Activated naive CD4-positive, alpha-beta T cell treated with anti-CD3 and anti-CD28 coated beads for 36 hours (primary cell): ENCODE measurements at regions of chr15 and their contacts with region 1.

Region 1: GRCh38 chr15:34241372-34242330 is 16.8 kb downstream of the EMC4 start:
- DNase-seq: peak; percentile 45
- H3K4me3 Mint-ChIP-seq: no peak overlapping the region
- H3K27ac Mint-ChIP-seq: peak overlapping the region; percentile 54
- H3K4me1 Mint-ChIP-seq: peaks cover 38% of the 10 kb centered on the region
- H3K27me3 Mint-ChIP-seq: no peaks in the 10 kb centered on the region

Region 2: DNA sequence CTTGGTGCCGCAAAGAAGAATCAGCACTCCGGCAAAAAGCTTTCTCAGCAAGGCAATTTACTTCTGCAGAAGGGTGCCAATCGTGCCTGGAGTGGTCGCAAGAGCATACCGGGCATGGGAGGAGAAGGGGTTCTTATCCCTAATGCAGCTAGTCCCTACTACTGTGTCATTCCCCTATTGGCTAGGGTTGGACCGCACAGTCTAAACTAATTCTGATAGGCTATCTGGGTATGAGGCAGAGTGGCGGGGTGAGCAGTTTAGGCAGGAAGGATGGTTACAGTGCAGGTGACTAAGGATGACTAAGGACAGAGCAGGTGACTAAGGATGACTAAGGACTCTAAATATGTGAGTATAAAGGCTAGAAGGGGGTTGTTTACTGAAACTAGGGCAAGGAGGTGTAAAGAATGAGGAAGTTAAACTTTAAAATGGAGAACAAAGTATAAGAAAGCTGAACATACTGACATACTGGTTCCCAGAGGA is 86.9 kb before region 1 on chr15:
- CTCF ChIA-PET with region 1: no interaction called
- intact Hi-C with region 1: no loop called
- DNase-seq: peak; percentile 22
- H3K4me3 Mint-ChIP-seq: no peak overlapping the region
- H3K27ac Mint-ChIP-seq: peak overlapping the region; percentile 69
- H3K4me1 Mint-ChIP-seq: peaks cover 6% of the 10 kb centered on the region
- H3K27me3 Mint-ChIP-seq: no peaks in the 10 kb centered on the region

Region 3: GRCh38 chr15:34223904-34224596 is 17.6 kb before region 1 on chr15:
- CTCF ChIA-PET with region 1: interaction called, 3 read pairs
- intact Hi-C with region 1: loop called (anchors 1 kb)
- DNase-seq: no peak
- H3K4me3 Mint-ChIP-seq: peak overlapping the region; percentile 96
- H3K27ac Mint-ChIP-seq: peak overlapping the region; percentile 97
- H3K4me1 Mint-ChIP-seq: peaks cover 31% of the 10 kb centered on the region
- H3K27me3 Mint-ChIP-seq: no peaks in the 10 kb centered on the region

Region 4: DNA sequence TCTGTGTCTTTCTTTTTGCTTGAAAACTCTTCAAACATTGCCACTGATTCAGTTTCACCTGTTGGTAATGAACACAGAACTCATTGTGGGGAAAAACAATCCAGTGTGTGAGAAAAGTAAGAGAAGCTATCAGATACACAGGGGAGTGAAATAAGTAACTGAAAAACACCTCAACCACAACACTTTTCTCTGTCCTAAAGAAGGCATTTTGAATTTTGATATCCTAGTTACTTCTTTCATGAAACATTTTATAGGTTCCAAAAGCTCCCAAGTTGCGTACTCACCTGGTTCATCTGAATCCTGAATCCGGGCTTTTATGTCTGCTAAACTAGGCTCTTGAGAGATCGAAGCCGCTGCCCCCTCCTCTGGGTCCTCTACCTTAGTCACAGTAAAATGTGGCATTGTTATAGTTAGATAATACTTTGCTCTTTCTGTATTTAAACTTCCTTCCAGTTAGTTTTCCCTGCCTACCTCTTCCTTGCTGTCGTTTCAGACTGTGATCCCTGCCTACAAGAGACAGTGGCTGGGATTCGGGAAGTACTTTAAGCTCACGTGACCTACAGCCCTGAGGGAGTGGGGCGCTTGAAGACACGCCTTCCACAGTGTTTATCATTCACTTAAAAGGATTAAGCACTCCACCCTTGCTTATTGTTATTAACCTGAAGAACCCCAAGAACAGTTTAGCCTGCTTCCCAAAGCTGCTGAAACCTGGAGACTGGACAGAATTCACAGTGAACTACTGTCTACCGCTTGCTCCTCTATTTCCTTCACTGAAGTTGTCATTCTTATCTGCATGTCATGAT is 76.8 kb after region 1 on chr15:
- CTCF ChIA-PET with region 1: interaction called, 6 read pairs
- intact Hi-C with region 1: loop called (anchors 1 kb)
- DNase-seq: peak; percentile 46
- H3K4me3 Mint-ChIP-seq: peak overlapping the region; percentile 96
- H3K27ac Mint-ChIP-seq: peak overlapping the region; percentile 92
- H3K4me1 Mint-ChIP-seq: peaks cover 61% of the 10 kb centered on the region
- H3K27me3 Mint-ChIP-seq: no peaks in the 10 kb centered on the region

Region 5: DNA sequence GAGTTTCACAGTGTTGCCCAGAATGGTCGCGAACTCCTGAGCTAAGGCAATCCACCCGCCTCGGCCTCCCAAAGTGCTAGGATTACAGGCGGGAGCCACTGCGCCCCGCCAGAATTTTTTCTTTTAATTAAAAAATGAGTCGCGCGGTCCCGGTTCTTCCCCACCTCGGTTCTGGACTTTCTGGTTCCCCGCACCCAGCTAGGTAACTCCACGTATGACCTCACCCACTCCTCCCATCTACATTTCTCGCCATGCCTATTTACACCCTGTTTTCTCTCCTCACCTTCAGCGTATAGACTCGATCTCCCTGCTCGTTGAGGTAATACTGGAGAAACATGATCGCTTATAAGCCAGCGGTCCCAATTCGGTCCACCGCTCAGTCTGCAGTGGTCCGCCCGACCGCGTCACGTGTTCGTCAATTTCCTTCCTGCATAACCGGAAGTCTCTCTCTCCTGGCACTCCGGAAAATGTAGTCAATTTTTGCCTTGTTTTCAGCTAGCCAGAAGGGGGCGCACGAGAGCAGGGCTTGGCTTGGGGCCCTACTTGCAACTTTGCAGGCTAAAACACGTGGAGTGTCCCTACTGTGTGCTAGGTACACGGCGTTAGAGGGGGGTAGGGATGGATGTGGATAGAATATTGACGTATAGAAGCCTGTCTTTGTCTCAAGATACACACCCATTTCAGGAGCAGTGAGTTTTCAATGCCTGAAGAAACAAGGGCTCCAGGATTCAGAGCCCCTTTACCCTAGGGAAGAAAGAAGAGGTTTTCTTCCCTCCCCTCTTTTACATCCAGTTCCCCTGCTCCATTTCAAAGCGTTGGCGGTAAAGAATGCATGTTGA is 101.3 kb after region 1 on chr15 and contains the starts of genes NOP10 and NUTM1:
- CTCF ChIA-PET with region 1: interaction called, 9 read pairs
- intact Hi-C with region 1: loop called (anchors 1 kb)
- DNase-seq: peak; percentile 98
- H3K4me3 Mint-ChIP-seq: no peak within 1 kb of the TSS
- H3K27ac Mint-ChIP-seq: no peak within 1 kb of the TSS
- H3K4me1 Mint-ChIP-seq: peaks cover 35% of the 10 kb centered on the region
- H3K27me3 Mint-ChIP-seq: no peaks in the 10 kb centered on the region
- total RNA-seq, gene NOP10: 220 to 227 TPM
- total RNA-seq, gene NUTM1: 0.05 TPM in 1 of 2 experiments, not detected in the other